GM12878 (cell line): ENCODE measurements at regions of chr18 and their contacts with region 1.

Region 1: DNA sequence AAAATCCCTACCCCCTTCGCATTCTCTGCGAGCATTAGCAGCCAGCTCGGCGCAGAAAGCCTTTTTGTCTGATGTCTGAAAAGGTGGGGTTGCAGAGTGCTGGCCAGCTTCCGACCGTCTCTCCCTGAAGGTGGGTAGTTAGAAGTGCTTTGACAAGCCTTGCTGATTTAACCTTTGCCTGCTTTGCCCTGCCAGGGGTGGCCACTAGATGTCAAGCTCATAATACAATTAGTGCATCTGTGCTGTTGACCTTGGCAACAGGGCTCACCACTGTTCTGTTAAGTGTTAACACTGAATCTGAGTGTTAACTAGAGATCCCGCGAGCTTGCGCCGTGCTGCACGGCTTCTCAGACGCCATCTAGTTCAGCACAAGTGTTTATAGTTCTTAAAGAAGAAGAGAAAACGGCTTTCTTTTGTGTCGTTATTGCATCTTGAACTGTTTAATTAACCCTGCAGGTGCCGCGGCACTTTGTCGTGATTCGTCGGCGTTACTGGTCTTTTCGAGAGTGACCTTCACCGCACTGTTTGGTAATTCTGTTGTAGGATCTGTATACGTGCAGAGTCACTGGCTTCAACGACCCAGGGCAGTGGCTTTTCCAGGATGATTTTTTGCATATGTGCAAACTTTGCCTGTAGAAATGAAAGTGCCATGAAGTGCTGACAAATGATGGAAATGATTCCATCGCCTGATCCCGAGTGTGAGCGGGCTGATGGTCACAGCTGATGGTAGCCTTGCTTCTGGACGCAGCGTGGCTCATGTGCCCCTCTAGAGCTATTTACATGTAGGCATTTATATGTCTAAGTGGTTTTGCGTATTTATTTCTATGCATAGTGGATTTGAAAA is 5.5 kb downstream of the SALL3 start:
- DNase-seq: no peak
- ATAC-seq: peak; percentile 59
- H3K4me3 ChIP-seq: no peak overlapping the region
- H3K27ac ChIP-seq: no peak overlapping the region
- H3K4me1 ChIP-seq: no peaks in the 10 kb centered on the region
- H3K27me3 ChIP-seq: no peaks in the 10 kb centered on the region
- CTCF ChIP-seq: peak; percentile 38 to 52 (median 44); a peak in 4 of 6 replicates
- EP300 ChIP-seq: no peak
- POLR2A ChIP-seq: no peak
- RAD21 ChIP-seq: peak; percentile 66

Region 2: DNA sequence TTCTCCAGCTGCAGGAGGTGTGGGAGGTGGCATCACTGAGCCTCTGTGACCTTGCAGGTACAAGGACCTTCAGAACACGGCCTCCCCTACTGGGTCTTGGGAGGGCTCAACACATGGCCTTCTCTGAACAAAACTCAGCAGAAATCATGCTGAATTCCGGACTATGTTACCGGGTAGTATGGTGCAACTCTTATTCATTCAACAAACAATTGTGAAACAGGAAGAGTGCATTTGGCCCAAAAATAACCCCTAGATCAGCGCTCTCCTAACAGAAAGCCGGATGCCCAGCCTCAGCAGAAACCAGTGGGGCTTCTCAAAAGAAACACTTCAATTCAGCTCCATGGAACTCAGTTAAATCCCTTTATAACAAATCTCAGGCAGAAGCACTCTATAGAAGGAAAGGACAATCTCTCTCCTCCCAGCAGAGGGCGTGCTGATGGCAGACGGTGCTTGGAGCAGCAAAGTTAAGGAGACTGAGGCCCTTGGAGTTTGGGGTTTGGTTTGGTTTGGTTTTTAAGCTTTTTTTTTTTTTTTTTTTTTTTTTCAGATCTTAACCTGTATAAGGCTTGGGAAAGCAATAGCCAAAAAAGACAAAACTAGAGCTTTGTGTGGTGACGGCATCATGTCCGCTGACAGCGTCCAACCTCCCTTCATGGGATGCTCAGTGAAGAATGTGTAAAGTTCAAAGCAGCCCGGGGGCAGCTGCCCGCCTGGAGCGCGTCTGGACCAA is 109.7 kb before region 1 on chr18:
- CTCF ChIA-PET with region 1: interaction called, 12 read pairs
- POLR2A ChIA-PET with region 1: no interaction called
- RAD21 ChIA-PET with region 1: no interaction called
- SMC1A ChIA-PET with region 1: interaction called, 3 read pairs
- in situ Hi-C with region 1: no loop called
- intact Hi-C with region 1: no loop called
- DNase-seq: no peak
- ATAC-seq: 0 out of 3 replicates have a peak, but pooled peaks have one; percentile 39
- H3K4me3 ChIP-seq: no peak overlapping the region
- H3K27ac ChIP-seq: no peak overlapping the region
- H3K4me1 ChIP-seq: no peaks in the 10 kb centered on the region
- H3K27me3 ChIP-seq: no peaks in the 10 kb centered on the region
- CTCF ChIP-seq: peak; percentile 41 to 58 (median 54); a peak in 5 of 6 replicates
- EP300 ChIP-seq: no peak
- POLR2A ChIP-seq: no peak
- RAD21 ChIP-seq: peak; percentile 48

Region 3: GRCh38 chr18:79258447-79258846 is 273.3 kb after region 1 on chr18:
- CTCF ChIA-PET with region 1: no interaction called
- POLR2A ChIA-PET with region 1: no interaction called
- RAD21 ChIA-PET with region 1: no interaction called
- SMC1A ChIA-PET with region 1: no interaction called
- in situ Hi-C with region 1: loop called (anchors 10 kb)
- intact Hi-C with region 1: no loop called
- DNase-seq: no peak
- ATAC-seq: peak; percentile 66
- H3K4me3 ChIP-seq: no peak overlapping the region
- H3K27ac ChIP-seq: no peak overlapping the region
- H3K4me1 ChIP-seq: no peaks in the 10 kb centered on the region
- H3K27me3 ChIP-seq: no peaks in the 10 kb centered on the region
- CTCF ChIP-seq: no peak
- EP300 ChIP-seq: no peak
- POLR2A ChIP-seq: no peak
- RAD21 ChIP-seq: no peak